A549 (cell line): ENCODE measurements at regions of chr7 and their contacts with region 1.

Region 1: GRCh38 chr7:24812310-24812945 is 55.2 kb upstream of the GSDME start:
- DNase-seq: peak; percentile 40 to 50
- ATAC-seq: peak; percentile 96 to 97
- H3K4me3 ChIP-seq: no peak overlapping the region
- H3K27ac ChIP-seq: no peak overlapping the region
- H3K4me1 ChIP-seq: no peaks in the 10 kb centered on the region
- CTCF ChIP-seq: peak; percentile 87
- EP300 ChIP-seq: no peak
- POLR2A ChIP-seq: no peak
- RAD21 ChIP-seq: peak; percentile 80 to 81

Region 2: DNA sequence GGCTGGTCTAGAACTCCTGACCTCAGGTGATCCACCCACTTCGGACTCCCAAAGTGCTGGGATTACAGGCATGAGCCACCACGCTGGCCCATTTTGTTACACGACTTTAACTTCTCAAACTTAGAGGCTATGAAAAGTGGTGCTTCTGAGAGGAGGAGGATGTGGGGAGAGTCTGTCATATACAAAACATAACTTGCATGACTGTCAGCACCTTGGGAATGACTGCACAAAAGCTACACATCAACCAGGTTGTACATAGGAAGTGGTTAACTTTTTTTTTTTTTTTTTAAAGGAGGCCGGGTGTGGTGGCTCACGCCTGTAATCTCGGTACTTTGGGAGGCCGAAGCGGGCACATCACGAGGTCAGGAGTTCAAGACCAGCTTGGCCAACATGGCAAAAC is 11.8 kb before region 1 on chr7:
- CTCF ChIA-PET with region 1: interaction called, 27 read pairs
- POLR2A ChIA-PET with region 1: no interaction called
- DNase-seq: no peak
- ATAC-seq: no peak
- H3K4me3 ChIP-seq: no peak overlapping the region
- H3K27ac ChIP-seq: no peak overlapping the region
- H3K4me1 ChIP-seq: no peaks in the 10 kb centered on the region
- CTCF ChIP-seq: no peak
- EP300 ChIP-seq: no peak
- POLR2A ChIP-seq: no peak
- RAD21 ChIP-seq: no peak

Region 3: DNA sequence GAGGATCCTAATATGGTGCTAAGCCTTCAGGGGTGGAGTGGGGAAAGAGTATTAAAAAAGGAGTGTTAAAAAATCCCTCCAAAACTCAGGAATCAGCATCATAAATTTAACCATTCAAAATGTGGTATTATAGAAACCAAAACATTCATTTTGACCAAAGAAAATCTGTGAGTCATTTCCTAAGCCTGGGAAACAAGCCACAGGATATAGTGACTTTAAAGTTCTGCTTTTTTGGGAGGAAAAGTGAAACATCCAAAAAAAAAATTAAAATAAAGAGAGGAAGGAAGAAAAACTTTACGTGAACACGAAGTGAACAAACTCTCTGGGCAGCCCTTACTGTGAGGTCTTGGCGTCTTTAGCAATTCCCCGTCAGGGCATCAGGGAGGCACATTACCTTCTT is 18.8 kb after region 1 on chr7:
- CTCF ChIA-PET with region 1: interaction called, 12 read pairs
- POLR2A ChIA-PET with region 1: no interaction called
- DNase-seq: no peak
- ATAC-seq: no peak
- H3K4me3 ChIP-seq: no peak overlapping the region
- H3K27ac ChIP-seq: no peak overlapping the region
- H3K4me1 ChIP-seq: peaks cover 21% of the 10 kb centered on the region
- CTCF ChIP-seq: no peak
- EP300 ChIP-seq: no peak
- POLR2A ChIP-seq: no peak
- RAD21 ChIP-seq: no peak

Region 4: GRCh38 chr7:24851786-24852185 is 39.4 kb after region 1 on chr7:
- CTCF ChIA-PET with region 1: interaction called, 10 read pairs
- POLR2A ChIA-PET with region 1: no interaction called
- DNase-seq: peak in 1 of 2 experiments; percentile 10
- ATAC-seq: peak; percentile 35 to 47; a peak in 1 of 6 replicates
- H3K4me3 ChIP-seq: no peak overlapping the region
- H3K27ac ChIP-seq: no peak overlapping the region
- H3K4me1 ChIP-seq: peaks cover 18% of the 10 kb centered on the region
- CTCF ChIP-seq: no peak
- EP300 ChIP-seq: no peak
- POLR2A ChIP-seq: no peak
- RAD21 ChIP-seq: no peak

Region 5: GRCh38 chr7:24863626-24864025 is 51.2 kb after region 1 on chr7:
- CTCF ChIA-PET with region 1: no interaction called
- POLR2A ChIA-PET with region 1: no interaction called
- DNase-seq: no peak
- ATAC-seq: no peak
- H3K4me3 ChIP-seq: no peak overlapping the region
- H3K27ac ChIP-seq: no peak overlapping the region
- H3K4me1 ChIP-seq: no peaks in the 10 kb centered on the region
- CTCF ChIP-seq: no peak
- EP300 ChIP-seq: no peak
- POLR2A ChIP-seq: no peak
- RAD21 ChIP-seq: no peak

Region 6: DNA sequence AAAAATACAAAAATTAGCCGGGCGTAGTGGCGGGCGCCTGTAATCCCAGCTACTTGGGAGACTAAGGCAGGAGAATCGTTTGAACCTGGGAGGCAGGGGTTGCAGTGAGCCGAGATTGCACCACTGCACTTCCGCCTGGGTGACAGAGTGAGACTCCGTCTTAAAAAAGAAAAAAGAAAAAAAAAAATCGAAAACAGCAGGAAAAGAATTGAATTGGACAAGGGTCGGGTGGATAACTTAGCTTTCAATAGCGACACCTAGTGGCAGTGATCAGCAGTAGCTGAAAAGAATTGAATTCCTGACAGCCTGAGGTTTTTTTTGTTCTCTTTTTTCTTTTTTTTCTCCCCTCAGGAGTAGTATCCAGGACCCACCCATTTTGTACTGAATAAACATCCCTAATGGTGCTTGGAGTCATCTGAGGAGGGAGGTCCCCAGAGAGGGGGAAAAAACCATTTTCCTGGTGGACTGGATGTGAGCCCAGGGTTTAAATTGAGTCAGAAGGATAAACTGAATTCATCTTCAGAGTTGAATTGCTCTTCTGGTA is 257.5 kb after region 1 on chr7:
- CTCF ChIA-PET with region 1: interaction called, 31 read pairs
- POLR2A ChIA-PET with region 1: interaction called, 4 read pairs
- DNase-seq: peak; percentile 82 to 84
- ATAC-seq: peak; percentile 81 to 87
- H3K4me3 ChIP-seq: peak overlapping the region; percentile 41
- H3K27ac ChIP-seq: peak overlapping the region; percentile 63 to 84
- H3K4me1 ChIP-seq: peaks cover 21% of the 10 kb centered on the region
- CTCF ChIP-seq: peak; percentile 95
- EP300 ChIP-seq: no peak
- POLR2A ChIP-seq: no peak
- RAD21 ChIP-seq: peak; percentile 85 to 89

Region 7: GRCh38 chr7:25083201-25083600 is 270.8 kb after region 1 on chr7:
- CTCF ChIA-PET with region 1: interaction called, 280 read pairs
- POLR2A ChIA-PET with region 1: no interaction called
- DNase-seq: no peak
- ATAC-seq: no peak
- H3K4me3 ChIP-seq: no peak overlapping the region
- H3K27ac ChIP-seq: no peak overlapping the region
- H3K4me1 ChIP-seq: no peaks in the 10 kb centered on the region
- CTCF ChIP-seq: no peak
- EP300 ChIP-seq: no peak
- POLR2A ChIP-seq: no peak
- RAD21 ChIP-seq: no peak

Region 8: GRCh38 chr7:25103773-25104172 is 291.3 kb after region 1 on chr7:
- CTCF ChIA-PET with region 1: interaction called, 280 read pairs
- POLR2A ChIA-PET with region 1: no interaction called
- DNase-seq: no peak
- ATAC-seq: no peak
- H3K4me3 ChIP-seq: no peak overlapping the region
- H3K27ac ChIP-seq: no peak overlapping the region
- H3K4me1 ChIP-seq: no peaks in the 10 kb centered on the region
- CTCF ChIP-seq: no peak
- EP300 ChIP-seq: no peak
- POLR2A ChIP-seq: no peak
- RAD21 ChIP-seq: no peak